CD14-positive monocyte (primary cell): ENCODE measurements at regions of chr9 and their contacts with region 1.

Region 1: DNA sequence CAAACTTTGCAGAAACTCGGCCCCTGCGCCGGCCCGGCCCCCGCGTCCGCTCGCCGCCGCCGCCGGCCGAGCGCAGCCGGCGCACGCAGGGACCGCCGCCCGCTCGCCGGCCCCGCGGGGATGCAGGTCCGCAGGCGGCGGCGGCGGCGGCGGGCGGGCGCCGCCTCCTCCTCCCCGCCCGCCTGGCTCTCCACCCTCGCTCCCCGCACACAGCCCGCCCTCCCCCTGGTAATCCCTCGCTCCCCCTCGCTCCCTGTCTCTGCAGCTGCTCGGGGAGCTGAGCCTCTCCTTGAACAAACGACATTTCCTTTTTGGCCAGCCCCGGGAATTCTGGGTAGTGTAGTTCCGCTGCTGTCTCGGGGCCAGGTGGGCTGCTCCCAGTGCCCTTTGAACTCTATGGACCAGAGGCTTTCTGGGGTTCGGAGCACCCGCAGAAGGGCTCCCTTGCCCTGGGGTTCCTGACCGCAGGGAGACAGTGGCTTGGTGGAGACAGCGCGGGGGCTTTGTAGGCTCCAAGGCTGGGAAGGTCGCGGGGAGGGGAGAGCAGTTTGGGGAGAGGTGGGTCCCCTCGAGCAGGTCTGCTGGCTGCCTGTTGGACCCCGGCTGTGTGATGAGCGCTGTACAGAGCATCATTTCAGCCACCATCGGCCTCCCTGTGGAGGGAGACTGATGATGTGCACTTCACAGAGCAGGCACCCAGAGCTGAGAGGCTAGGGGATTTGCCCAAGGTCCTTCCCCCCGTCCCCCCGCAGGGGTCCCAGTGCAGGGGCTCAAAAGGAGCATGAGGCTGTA is 1.8 kb upstream of the FAM78A start:
- DNase-seq: peak; percentile 67 to 72 (median 71)
- H3K4me3 ChIP-seq: peak overlapping the region; percentile 38 to 94 (median 93)
- H3K4me3 Mint-ChIP-seq: peak overlapping the region; percentile 81 to 82
- H3K27ac ChIP-seq: peak overlapping the region; percentile 76 to 93
- H3K27ac Mint-ChIP-seq: peak overlapping the region; percentile 77 to 93 (median 89)
- H3K4me1 ChIP-seq: peaks cover 43 to 50% of the 10 kb centered on the region in 2 donors
- H3K4me1 Mint-ChIP-seq: peaks cover 49% of the 10 kb centered on the region
- H3K27me3 ChIP-seq: peaks cover 7 to 26% of the 10 kb centered on the region in 2 donors
- H3K27me3 Mint-ChIP-seq: peaks cover 20 to 27% (median 26%) of the 10 kb centered on the region in 3 donors
- CTCF ChIP-seq: no peak

Region 2: GRCh38 chr9:131237931-131238401 is 40.1 kb before region 1 on chr9:
- intact Hi-C with region 1: loop called (anchors 5 kb)
- DNase-seq: peak; percentile 75 to 81 (median 79)
- H3K4me3 ChIP-seq: peak overlapping the region; percentile 19 to 70 (median 32)
- H3K4me3 Mint-ChIP-seq: peak overlapping the region; percentile 79 to 90
- H3K27ac ChIP-seq: peak overlapping the region; percentile 82 to 89
- H3K27ac Mint-ChIP-seq: peak overlapping the region; percentile 89 to 98 (median 95)
- H3K4me1 ChIP-seq: peaks cover 28 to 30% of the 10 kb centered on the region in 2 donors
- H3K4me1 Mint-ChIP-seq: peaks cover 40% of the 10 kb centered on the region
- H3K27me3 ChIP-seq: no peaks in the 10 kb centered on the region
- H3K27me3 Mint-ChIP-seq: peaks cover 0 to 1% (median 0%) of the 10 kb centered on the region in 3 donors
- CTCF ChIP-seq: no peak

Region 3: GRCh38 chr9:131253891-131254491 is 24.1 kb before region 1 on chr9:
- intact Hi-C with region 1: loop called in 1 of 2 experiments (anchors 2 kb)
- DNase-seq: peak; percentile 80 to 89 (median 84)
- H3K4me3 ChIP-seq: peak overlapping the region in 1 of 3 experiments; percentile 82
- H3K4me3 Mint-ChIP-seq: peak overlapping the region; percentile 45 to 55
- H3K27ac ChIP-seq: peak overlapping the region; percentile 95
- H3K27ac Mint-ChIP-seq: peak overlapping the region; percentile 95 to 99 (median 96)
- H3K4me1 ChIP-seq: peaks cover 78 to 79% of the 10 kb centered on the region in 2 donors
- H3K4me1 Mint-ChIP-seq: peaks cover 79% of the 10 kb centered on the region
- H3K27me3 ChIP-seq: no peaks in the 10 kb centered on the region
- H3K27me3 Mint-ChIP-seq: peaks cover 0 to 3% (median 0%) of the 10 kb centered on the region in 3 donors
- CTCF ChIP-seq: no peak

Region 4: DNA sequence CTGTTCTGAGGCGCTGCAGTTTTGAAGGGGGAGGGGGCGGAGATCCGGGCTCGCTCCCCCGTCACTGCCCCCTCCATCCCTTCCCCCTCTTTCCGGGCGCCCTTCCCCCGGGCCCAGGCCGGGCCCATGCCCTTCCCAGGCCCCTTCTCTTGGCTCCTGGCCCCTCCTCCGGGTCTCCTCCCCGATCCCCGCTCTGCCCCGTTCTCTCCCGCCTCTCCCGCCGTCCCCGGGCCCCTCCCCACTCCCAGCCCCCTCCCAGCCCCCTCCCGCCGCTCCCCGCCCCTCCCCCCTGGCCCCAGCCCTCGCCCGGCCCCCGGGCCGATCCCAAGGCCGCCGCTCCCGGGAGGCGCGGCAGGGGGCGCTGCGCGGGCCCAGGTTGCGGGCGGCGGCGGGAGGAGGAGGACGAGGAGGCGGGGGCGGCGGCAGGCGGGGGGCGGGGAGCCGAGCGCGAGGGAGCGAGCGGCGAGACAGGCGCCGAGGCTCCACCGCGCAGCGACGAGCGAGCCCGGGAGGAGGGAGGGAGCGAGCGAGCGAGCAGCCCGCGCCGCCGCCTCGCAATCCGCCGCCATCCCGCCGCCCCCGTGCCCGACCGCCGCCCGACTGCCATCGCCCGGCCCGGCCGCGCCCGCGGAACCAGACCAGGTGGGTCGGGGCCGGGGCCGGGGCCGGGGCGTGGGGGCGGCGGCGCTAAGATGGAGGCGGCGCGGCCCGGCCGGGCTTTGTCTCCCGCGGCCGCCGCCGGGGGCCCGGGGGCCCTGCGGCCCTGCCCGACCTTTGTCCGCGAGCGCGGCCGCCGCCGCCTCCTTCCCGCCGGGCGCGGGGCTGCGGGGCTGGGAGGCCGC is 115.7 kb after region 1 on chr9 and contains the start of gene PRRC2B:
- intact Hi-C with region 1: loop called in 1 of 2 experiments (anchors 5 kb)
- DNase-seq: peak; percentile 66 to 81 (median 72)
- H3K4me3 ChIP-seq: peak within 1 kb of the TSS; percentile 68 to 94 (median 81)
- H3K4me3 Mint-ChIP-seq: peak within 1 kb of the TSS; percentile 88 to 91
- H3K27ac ChIP-seq: peak within 1 kb of the TSS; percentile 81 to 96
- H3K27ac Mint-ChIP-seq: peak within 1 kb of the TSS; percentile 85 to 93 (median 89)
- H3K4me1 ChIP-seq: peaks cover 47 to 54% of the 10 kb centered on the region in 2 donors
- H3K4me1 Mint-ChIP-seq: peaks cover 52% of the 10 kb centered on the region
- H3K27me3 ChIP-seq: no peaks in the 10 kb centered on the region
- H3K27me3 Mint-ChIP-seq: peaks cover 0 to 1% (median 0%) of the 10 kb centered on the region in 3 donors
- CTCF ChIP-seq: peak; percentile 65
- polyA plus RNA-seq, gene PRRC2B: 2.8 to 36.2 (median 8.6) TPM

Region 5: GRCh38 chr9:132354637-132355355 is 1076.7 kb after region 1 on chr9 and contains the start of gene SETX:
- intact Hi-C with region 1: loop called in 1 of 2 experiments (anchors 10 kb)
- DNase-seq: peak; percentile 97 to 98 (median 97)
- H3K4me3 ChIP-seq: peak within 1 kb of the TSS; percentile 54 to 98 (median 94)
- H3K4me3 Mint-ChIP-seq: peak within 1 kb of the TSS; percentile 95
- H3K27ac ChIP-seq: peak within 1 kb of the TSS; percentile 77 to 96
- H3K27ac Mint-ChIP-seq: peak within 1 kb of the TSS; percentile 93 to 99 (median 97)
- H3K4me1 ChIP-seq: peaks cover 53 to 59% of the 10 kb centered on the region in 2 donors
- H3K4me1 Mint-ChIP-seq: peaks cover 56% of the 10 kb centered on the region
- H3K27me3 ChIP-seq: no peaks in the 10 kb centered on the region
- H3K27me3 Mint-ChIP-seq: no peaks in the 10 kb centered on the region
- CTCF ChIP-seq: no peak
- polyA plus RNA-seq, gene SETX: 18.4 to 31.7 (median 24.2) TPM